ENCODE measurements at regions of chr7 and their contacts with region 1.

Region 1: GRCh38 chr7:145016068-145016467 is 180.2 kb upstream of the TPK1 start:
- DNase-seq: no peak
- H3K4me3 Mint-ChIP-seq: no peak overlapping the region
- H3K27ac Mint-ChIP-seq: no peak overlapping the region
- H3K4me1 Mint-ChIP-seq: no peaks in the 10 kb centered on the region
- H3K27me3 Mint-ChIP-seq: no peaks in the 10 kb centered on the region
- CTCF ChIP-seq: no peak

Region 2: DNA sequence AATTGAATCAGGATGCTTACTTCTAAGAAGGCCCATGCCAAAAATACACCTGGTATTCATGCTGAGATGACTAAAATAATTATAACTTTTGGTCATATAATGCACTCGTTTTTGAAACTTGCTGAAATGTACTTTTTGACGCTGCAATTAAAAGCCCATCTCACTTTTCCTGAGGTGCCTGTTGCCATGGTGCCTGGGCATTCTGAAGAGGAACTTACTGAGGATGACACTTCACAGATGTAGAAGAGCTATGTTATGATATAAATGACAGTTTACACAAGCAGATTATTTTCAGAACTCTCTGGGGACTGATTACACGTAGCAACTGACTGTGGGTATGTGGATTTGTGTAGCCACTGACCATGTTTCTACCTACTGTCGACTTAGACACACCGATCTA is 362.6 kb before region 1 on chr7:
- CTCF ChIA-PET with region 1: no interaction called
- intact Hi-C with region 1: loop called (anchors 5 kb)
- DNase-seq: no peak
- H3K4me3 Mint-ChIP-seq: no peak overlapping the region
- H3K27ac Mint-ChIP-seq: no peak overlapping the region
- H3K4me1 Mint-ChIP-seq: no peaks in the 10 kb centered on the region
- H3K27me3 Mint-ChIP-seq: no peaks in the 10 kb centered on the region
- CTCF ChIP-seq: no peak

Region 3: GRCh38 chr7:145050415-145050814 is 34.3 kb after region 1 on chr7:
- CTCF ChIA-PET with region 1: no interaction called
- intact Hi-C with region 1: no loop called
- DNase-seq: no peak
- H3K4me3 Mint-ChIP-seq: no peak overlapping the region
- H3K27ac Mint-ChIP-seq: no peak overlapping the region
- H3K4me1 Mint-ChIP-seq: no peaks in the 10 kb centered on the region
- H3K27me3 Mint-ChIP-seq: no peaks in the 10 kb centered on the region
- CTCF ChIP-seq: no peak